Transverse colon (tissue), 4 donors: ENCODE measurements at regions of chr9 and their contacts with region 1.

Region 1: DNA sequence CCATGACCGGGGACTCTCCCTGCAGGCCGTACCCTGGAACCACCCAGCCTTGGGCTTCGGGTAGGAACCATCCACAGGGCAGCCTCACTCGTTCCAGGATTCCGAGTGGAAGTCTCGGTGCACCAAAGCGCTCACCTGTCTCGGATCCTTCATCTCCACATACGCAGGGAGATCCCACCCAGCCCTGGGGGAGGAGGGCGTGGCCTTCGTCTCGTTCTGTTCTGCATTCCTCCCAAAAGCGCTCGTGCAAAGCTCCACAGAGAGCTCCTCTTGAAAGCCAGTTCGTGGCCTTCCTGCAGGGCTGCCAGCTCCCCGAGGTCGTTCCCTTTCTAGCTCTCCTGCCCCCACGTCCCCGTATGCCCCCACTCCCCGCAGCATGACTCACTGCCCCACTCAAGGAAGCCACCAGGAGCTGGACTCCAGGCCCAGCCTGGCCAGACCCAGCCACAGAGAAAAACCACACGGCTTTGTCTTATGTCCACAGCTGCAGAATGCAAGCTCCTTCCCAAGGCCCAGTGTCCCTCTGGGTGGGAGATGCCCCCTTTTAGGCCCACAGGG is 65.0 kb upstream of the SARDH start:
- DNase-seq: no peak
- H3K4me3 ChIP-seq: no peak overlapping the region
- H3K27ac ChIP-seq: no peak overlapping the region
- H3K4me1 ChIP-seq: no peaks in the 10 kb centered on the region
- H3K27me3 ChIP-seq: no peaks in the 10 kb centered on the region
- CTCF ChIP-seq: no peak
- EP300 ChIP-seq: no peak
- POLR2A ChIP-seq: no peak

Region 2: DNA sequence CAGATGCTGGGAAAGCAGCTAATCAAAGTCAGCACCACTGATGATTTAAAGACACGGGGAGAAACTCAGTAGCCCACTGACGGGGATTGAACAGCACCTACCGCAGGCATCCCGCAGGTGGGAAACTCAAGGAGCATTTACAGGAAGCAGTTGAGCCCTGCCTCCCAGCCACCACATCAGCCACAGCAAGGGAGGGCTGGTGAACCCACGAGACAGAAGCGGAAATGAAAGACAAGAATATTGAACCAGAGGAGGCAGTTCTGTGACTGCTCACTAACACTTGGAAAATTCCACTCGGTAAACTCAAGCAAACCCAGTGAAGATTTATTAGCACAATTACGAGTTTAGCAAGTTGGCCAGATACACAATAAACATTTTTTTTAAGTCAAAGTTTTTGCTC is 183.3 kb before region 1 on chr9:
- in situ Hi-C with region 1: no loop called
- intact Hi-C with region 1: no loop called
- DNase-seq: peak; percentile 23
- H3K4me3 ChIP-seq: no peak overlapping the region
- H3K27ac ChIP-seq: no peak overlapping the region
- H3K4me1 ChIP-seq: no peaks in the 10 kb centered on the region
- H3K27me3 ChIP-seq: peaks cover 48% of the 10 kb centered on the region
- CTCF ChIP-seq: no peak
- EP300 ChIP-seq: no peak
- POLR2A ChIP-seq: no peak

Region 3: GRCh38 chr9:133999851-134000265 is 196.8 kb after region 1 on chr9:
- in situ Hi-C with region 1: loop called in 1 of 4 experiments (anchors 10 kb)
- intact Hi-C with region 1: no loop called
- DNase-seq: no peak
- H3K4me3 ChIP-seq: no peak overlapping the region
- H3K27ac ChIP-seq: no peak overlapping the region
- H3K4me1 ChIP-seq: no peaks in the 10 kb centered on the region
- H3K27me3 ChIP-seq: no peaks in the 10 kb centered on the region
- CTCF ChIP-seq: no peak
- EP300 ChIP-seq: no peak
- POLR2A ChIP-seq: no peak